CD14-positive monocyte (primary cell): ENCODE measurements at regions of chr3 and their contacts with region 1.

Region 1: GRCh38 chr3:187738331-187739093 is 6.8 kb downstream of the BCL6 start:
- DNase-seq: peak; percentile 66 to 79 (median 79)
- H3K4me3 ChIP-seq: peak overlapping the region; percentile 68 to 96 (median 77)
- H3K4me3 Mint-ChIP-seq: peak overlapping the region; percentile 95 to 100
- H3K27ac ChIP-seq: peak overlapping the region; percentile 96 to 99
- H3K27ac Mint-ChIP-seq: peak overlapping the region; percentile 99 to 100 (median 100)
- H3K4me1 ChIP-seq: peaks cover 47 to 75% of the 10 kb centered on the region in 2 donors
- H3K4me1 Mint-ChIP-seq: peaks cover 45% of the 10 kb centered on the region
- H3K27me3 ChIP-seq: no peaks in the 10 kb centered on the region
- H3K27me3 Mint-ChIP-seq: peaks cover 0 to 9% (median 3%) of the 10 kb centered on the region in 3 donors
- CTCF ChIP-seq: peak; percentile 77

Region 2: GRCh38 chr3:187669675-187670504 is 68.6 kb before region 1 on chr3 and contains the start of gene SST:
- intact Hi-C with region 1: no loop called
- DNase-seq: no peak
- H3K4me3 ChIP-seq: no peak within 1 kb of the TSS
- H3K4me3 Mint-ChIP-seq: peak within 1 kb of the TSS in 1 of 2 donors; percentile 62
- H3K27ac ChIP-seq: no peak within 1 kb of the TSS
- H3K27ac Mint-ChIP-seq: no peak within 1 kb of the TSS
- H3K4me1 ChIP-seq: no peaks in the 10 kb centered on the region
- H3K4me1 Mint-ChIP-seq: no peaks in the 10 kb centered on the region
- H3K27me3 ChIP-seq: peaks cover 47 to 57% of the 10 kb centered on the region in 2 donors
- H3K27me3 Mint-ChIP-seq: peaks cover 41 to 60% (median 51%) of the 10 kb centered on the region in 3 donors
- CTCF ChIP-seq: no peak
- polyA plus RNA-seq, gene SST: not detected

Region 3: DNA sequence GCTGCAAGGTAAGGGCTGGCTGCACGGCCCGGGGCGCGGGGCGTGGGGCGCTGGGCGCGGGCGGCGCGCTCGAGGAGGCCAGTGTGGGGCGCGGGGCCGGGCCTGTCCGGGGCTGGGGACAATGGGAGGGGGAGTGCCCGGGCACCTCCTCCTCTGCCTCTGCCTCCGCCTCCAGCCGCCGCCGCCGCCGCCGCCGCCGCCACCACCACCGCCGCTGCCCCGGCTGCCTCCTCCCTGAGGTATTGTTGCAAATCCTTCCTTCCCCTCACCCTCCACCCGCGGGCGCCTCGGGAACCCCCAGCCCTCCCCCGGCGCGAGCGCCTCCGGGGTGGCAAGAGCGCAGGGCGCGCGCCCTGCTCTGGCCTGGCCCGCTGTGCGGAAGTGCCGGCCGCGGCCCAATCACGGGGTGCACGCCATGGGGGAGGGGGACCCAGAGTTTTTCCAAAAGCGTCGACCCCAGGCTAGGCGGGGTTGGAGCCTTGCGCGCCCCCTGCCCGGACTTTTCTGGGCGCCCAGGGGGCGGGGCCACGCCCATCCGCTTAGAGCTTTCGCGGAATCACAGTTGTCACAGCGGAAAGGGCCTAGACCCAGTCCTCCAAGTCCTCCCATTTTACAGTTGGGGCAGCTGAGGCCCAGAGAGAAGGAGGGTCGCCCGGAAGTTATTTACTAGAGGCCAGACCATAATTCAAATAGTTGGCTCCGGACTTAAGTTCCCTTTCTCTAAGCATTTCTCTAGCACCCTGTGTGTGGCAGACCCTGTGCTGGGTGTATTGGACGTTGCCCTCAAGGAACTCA is 415.7 kb after region 1 on chr3 and contains the start of gene LPP:
- intact Hi-C with region 1: loop called in 1 of 2 experiments (anchors 5 kb)
- DNase-seq: peak; percentile 84 to 95 (median 91)
- H3K4me3 ChIP-seq: peak within 1 kb of the TSS; percentile 64 to 86 (median 69)
- H3K4me3 Mint-ChIP-seq: peak within 1 kb of the TSS; percentile 95 to 96
- H3K27ac ChIP-seq: peak within 1 kb of the TSS; percentile 87 to 96
- H3K27ac Mint-ChIP-seq: peak within 1 kb of the TSS; percentile 93 to 97 (median 96)
- H3K4me1 ChIP-seq: peaks cover 20 to 34% of the 10 kb centered on the region in 2 donors
- H3K4me1 Mint-ChIP-seq: peaks cover 44% of the 10 kb centered on the region
- H3K27me3 ChIP-seq: no peaks in the 10 kb centered on the region
- H3K27me3 Mint-ChIP-seq: peaks cover 0 to 6% (median 0%) of the 10 kb centered on the region in 3 donors
- CTCF ChIP-seq: no peak
- polyA plus RNA-seq, gene LPP: 14.1 to 23.2 (median 15.3) TPM

Region 4: GRCh38 chr3:188432802-188433520 is 694.4 kb after region 1 on chr3:
- intact Hi-C with region 1: loop called in 1 of 2 experiments (anchors 5 kb)
- DNase-seq: peak; percentile 75 to 86 (median 80)
- H3K4me3 ChIP-seq: peak overlapping the region in 2 of 3 experiments; percentile 43 to 60
- H3K4me3 Mint-ChIP-seq: peak overlapping the region; percentile 60 to 80
- H3K27ac ChIP-seq: peak overlapping the region; percentile 86 to 94
- H3K27ac Mint-ChIP-seq: peak overlapping the region; percentile 98 to 100 (median 100)
- H3K4me1 ChIP-seq: peaks cover 53 to 79% of the 10 kb centered on the region in 2 donors
- H3K4me1 Mint-ChIP-seq: peaks cover 62% of the 10 kb centered on the region
- H3K27me3 ChIP-seq: no peaks in the 10 kb centered on the region
- H3K27me3 Mint-ChIP-seq: no peaks in the 10 kb centered on the region
- CTCF ChIP-seq: no peak

Region 5: DNA sequence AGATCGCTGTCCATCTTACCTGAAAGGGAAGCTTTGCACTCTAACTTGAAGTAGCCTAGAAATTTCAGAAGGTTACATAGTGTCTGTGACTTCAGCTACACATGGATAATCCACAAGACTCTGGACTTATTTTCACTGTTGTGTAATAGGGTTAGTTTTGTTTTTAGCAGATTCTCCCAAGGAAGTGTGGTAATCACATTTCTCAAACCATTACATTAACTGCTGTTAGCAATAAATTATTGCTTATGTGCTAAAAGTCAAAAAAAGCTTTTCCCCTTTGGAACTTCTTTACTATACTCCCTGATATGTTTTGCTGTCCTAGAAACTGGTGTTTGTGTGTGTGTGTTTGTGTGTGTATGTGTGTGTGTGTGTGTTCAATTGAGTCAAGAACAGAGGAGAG is 1081.4 kb after region 1 on chr3:
- intact Hi-C with region 1: loop called (anchors 10 kb)
- DNase-seq: peak; percentile 63 to 87 (median 74)
- H3K4me3 ChIP-seq: peak overlapping the region in 1 of 3 experiments; percentile 47
- H3K4me3 Mint-ChIP-seq: peak overlapping the region; percentile 35 to 77
- H3K27ac ChIP-seq: peak overlapping the region; percentile 80 to 89
- H3K27ac Mint-ChIP-seq: peak overlapping the region; percentile 92 to 99 (median 95)
- H3K4me1 ChIP-seq: peaks cover 65 to 82% of the 10 kb centered on the region in 2 donors
- H3K4me1 Mint-ChIP-seq: peaks cover 72% of the 10 kb centered on the region
- H3K27me3 ChIP-seq: no peaks in the 10 kb centered on the region
- H3K27me3 Mint-ChIP-seq: peaks cover 0 to 2% (median 0%) of the 10 kb centered on the region in 3 donors
- CTCF ChIP-seq: no peak

Region 6: GRCh38 chr3:188954590-188955208 is 1216.2 kb after region 1 on chr3:
- intact Hi-C with region 1: loop called (anchors 2 to 5 kb)
- DNase-seq: peak; percentile 80 to 87 (median 82)
- H3K4me3 ChIP-seq: no peak overlapping the region
- H3K4me3 Mint-ChIP-seq: no peak overlapping the region
- H3K27ac ChIP-seq: peak overlapping the region in 1 of 2 donors; percentile 6
- H3K27ac Mint-ChIP-seq: peak overlapping the region in 6 of 7 donors; percentile 53 to 74 (median 68)
- H3K4me1 ChIP-seq: peaks cover 36 to 46% of the 10 kb centered on the region in 2 donors
- H3K4me1 Mint-ChIP-seq: peaks cover 47% of the 10 kb centered on the region
- H3K27me3 ChIP-seq: no peaks in the 10 kb centered on the region
- H3K27me3 Mint-ChIP-seq: peaks cover 0 to 2% (median 0%) of the 10 kb centered on the region in 3 donors
- CTCF ChIP-seq: peak; percentile 94